ENCODE measurements at regions of chr1 and their contacts with region 1.

Region 1: GRCh38 chr1:205591522-205592351 is 40.1 kb downstream of the ELK4 start:
- DNase-seq: peak; percentile 82 to 91 (median 85)
- H3K4me3 ChIP-seq: peak overlapping the region; percentile 68
- H3K4me3 Mint-ChIP-seq: peak overlapping the region; percentile 86 to 94 (median 89)
- H3K27ac ChIP-seq: peak overlapping the region; percentile 26
- H3K27ac Mint-ChIP-seq: peak overlapping the region; percentile 33 to 93 (median 90)
- H3K4me1 ChIP-seq: peaks cover 37% of the 10 kb centered on the region
- H3K4me1 Mint-ChIP-seq: peaks cover 17 to 30% (median 29%) of the 10 kb centered on the region in 3 donors
- H3K27me3 ChIP-seq: no peaks in the 10 kb centered on the region
- H3K27me3 Mint-ChIP-seq: no peaks in the 10 kb centered on the region

Region 2: DNA sequence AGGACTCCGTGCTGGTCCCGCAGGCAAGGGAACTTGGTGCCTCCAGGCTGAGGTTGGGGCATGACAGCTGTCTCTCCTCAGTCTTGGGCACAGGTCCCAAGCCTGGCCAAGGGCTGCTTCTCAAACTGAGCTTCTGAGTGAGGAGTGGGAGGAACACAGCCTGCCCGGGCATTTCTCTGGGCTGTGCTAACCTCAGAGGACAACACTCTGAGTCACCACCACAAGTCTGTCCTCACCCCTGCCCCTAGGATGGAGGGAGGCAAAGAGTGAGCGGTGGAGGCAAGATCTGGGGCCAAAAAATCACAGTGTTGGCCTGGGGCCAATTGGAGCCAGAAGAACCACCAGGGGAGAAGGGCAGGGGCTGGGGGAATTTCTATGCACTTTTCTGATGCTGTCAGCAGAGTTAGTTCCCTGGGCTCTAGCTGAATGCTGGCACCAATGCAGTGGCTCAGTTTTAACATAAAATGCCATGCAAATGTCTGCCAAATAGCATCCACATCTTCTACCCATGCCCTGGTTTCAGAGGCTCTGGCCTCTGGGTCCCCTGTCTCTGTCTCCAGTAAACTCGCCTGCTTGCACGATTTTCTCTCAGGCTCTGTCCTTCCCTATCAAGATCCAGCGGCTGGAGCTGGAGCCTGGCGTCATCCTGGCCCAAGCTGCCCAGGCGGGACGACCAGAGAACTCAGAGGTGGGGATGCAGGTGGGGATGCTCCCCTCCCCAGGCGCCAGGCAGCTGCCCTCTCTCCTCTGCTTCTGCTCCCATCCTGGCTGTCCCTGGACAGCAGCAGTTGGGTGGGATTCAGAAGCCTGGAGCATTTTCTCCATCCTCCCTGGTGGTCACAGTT is 98.3 kb before region 1 on chr1:
- CTCF ChIA-PET with region 1: no interaction called
- POLR2A ChIA-PET with region 1: no interaction called
- DNase-seq: no peak
- H3K4me3 ChIP-seq: no peak overlapping the region
- H3K4me3 Mint-ChIP-seq: no peak overlapping the region
- H3K27ac ChIP-seq: no peak overlapping the region
- H3K27ac Mint-ChIP-seq: no peak overlapping the region
- H3K4me1 ChIP-seq: no peaks in the 10 kb centered on the region
- H3K4me1 Mint-ChIP-seq: no peaks in the 10 kb centered on the region
- H3K27me3 ChIP-seq: peaks cover 12% of the 10 kb centered on the region
- H3K27me3 Mint-ChIP-seq: peaks cover 14 to 43% of the 10 kb centered on the region in 2 donors

Region 3: GRCh38 chr1:205528887-205529825 is 62.6 kb before region 1 on chr1:
- CTCF ChIA-PET with region 1: interaction called, 16 read pairs
- POLR2A ChIA-PET with region 1: no interaction called
- DNase-seq: peak; percentile 64 to 82 (median 75)
- H3K4me3 ChIP-seq: no peak overlapping the region
- H3K4me3 Mint-ChIP-seq: peak overlapping the region in 6 of 7 donors; percentile 34 to 78 (median 44)
- H3K27ac ChIP-seq: no peak overlapping the region
- H3K27ac Mint-ChIP-seq: peak overlapping the region in 1 of 8 donors; percentile 19
- H3K4me1 ChIP-seq: no peaks in the 10 kb centered on the region
- H3K4me1 Mint-ChIP-seq: peaks cover 0 to 7% (median 4%) of the 10 kb centered on the region in 3 donors
- H3K27me3 ChIP-seq: no peaks in the 10 kb centered on the region
- H3K27me3 Mint-ChIP-seq: peaks cover 4 to 8% of the 10 kb centered on the region in 2 donors

Region 4: GRCh38 chr1:205631727-205632373 is 40.1 kb after region 1 on chr1 and contains the start of gene ELK4:
- CTCF ChIA-PET with region 1: interaction called, 96 read pairs
- POLR2A ChIA-PET with region 1: interaction called, 67 read pairs
- DNase-seq: peak; percentile 99 to 100 (median 99)
- H3K4me3 ChIP-seq: peak within 1 kb of the TSS; percentile 80
- H3K4me3 Mint-ChIP-seq: peak within 1 kb of the TSS; percentile 88 to 95 (median 91)
- H3K27ac ChIP-seq: peak within 1 kb of the TSS; percentile 89
- H3K27ac Mint-ChIP-seq: peak within 1 kb of the TSS; percentile 90 to 99 (median 98)
- H3K4me1 ChIP-seq: peaks cover 41% of the 10 kb centered on the region
- H3K4me1 Mint-ChIP-seq: peaks cover 39 to 53% (median 46%) of the 10 kb centered on the region in 3 donors
- H3K27me3 ChIP-seq: no peaks in the 10 kb centered on the region
- H3K27me3 Mint-ChIP-seq: peaks cover 0 to 1% of the 10 kb centered on the region in 2 donors
- total RNA-seq, gene ELK4: 83.3 to 88.7 TPM

Region 5: DNA sequence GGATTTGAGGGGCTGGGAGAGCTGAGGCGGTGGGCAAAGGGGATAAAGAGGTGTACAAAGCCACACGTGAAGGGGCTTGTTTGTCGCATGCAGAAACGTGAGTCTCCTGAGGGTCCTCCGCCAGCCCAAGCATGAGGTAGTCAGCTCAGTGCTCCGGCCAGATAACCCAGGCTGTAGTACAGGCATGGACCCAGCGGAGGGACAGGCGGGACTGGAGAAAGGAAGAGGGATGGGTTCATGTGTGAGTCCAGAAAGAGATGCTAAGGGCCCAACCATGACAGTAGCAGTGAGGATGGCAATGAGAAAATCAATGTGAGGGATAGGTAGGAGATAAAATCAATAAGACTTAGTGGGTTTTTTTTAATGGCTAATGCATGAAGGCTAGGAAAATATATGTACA is 53.8 kb after region 1 on chr1:
- CTCF ChIA-PET with region 1: interaction called, 10 read pairs
- POLR2A ChIA-PET with region 1: no interaction called
- DNase-seq: no peak
- H3K4me3 ChIP-seq: no peak overlapping the region
- H3K4me3 Mint-ChIP-seq: no peak overlapping the region
- H3K27ac ChIP-seq: no peak overlapping the region
- H3K27ac Mint-ChIP-seq: no peak overlapping the region
- H3K4me1 ChIP-seq: no peaks in the 10 kb centered on the region
- H3K4me1 Mint-ChIP-seq: no peaks in the 10 kb centered on the region
- H3K27me3 ChIP-seq: no peaks in the 10 kb centered on the region
- H3K27me3 Mint-ChIP-seq: peaks cover 9 to 21% of the 10 kb centered on the region in 2 donors

Region 6: DNA sequence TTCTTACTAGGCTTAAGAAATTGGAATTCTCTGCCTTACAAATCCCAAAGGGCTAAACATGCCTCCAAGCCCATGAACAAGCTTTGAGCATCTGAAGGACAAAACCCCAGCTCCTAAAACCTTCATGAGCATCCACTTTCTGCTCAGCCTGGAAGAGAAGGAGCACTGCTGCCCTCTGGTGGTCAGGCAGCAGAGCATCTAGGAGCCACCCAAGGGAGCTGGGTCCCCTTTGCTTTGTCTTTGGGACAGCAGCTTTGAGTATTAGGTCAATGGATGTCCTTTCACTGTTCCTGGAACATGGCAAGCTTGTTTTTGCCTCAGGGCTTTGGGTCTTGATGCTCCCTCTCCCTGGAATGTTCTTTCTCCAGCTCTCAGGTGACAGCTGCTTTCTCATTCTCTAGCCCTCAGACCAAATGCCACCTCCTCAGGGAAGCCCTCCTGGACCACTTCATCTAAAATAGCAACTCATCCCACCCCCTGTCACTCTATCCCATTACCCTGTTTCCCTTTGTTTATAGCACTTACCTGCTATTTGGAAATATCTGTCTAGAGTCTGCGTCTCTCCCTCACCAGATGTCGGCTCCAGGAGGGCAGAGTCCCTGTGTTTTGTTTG is 385.8 kb after region 1 on chr1:
- CTCF ChIA-PET with region 1: interaction called, 12 read pairs
- POLR2A ChIA-PET with region 1: no interaction called
- DNase-seq: peak; percentile 60 to 79 (median 63)
- H3K4me3 ChIP-seq: no peak overlapping the region
- H3K4me3 Mint-ChIP-seq: no peak overlapping the region
- H3K27ac ChIP-seq: no peak overlapping the region
- H3K27ac Mint-ChIP-seq: no peak overlapping the region
- H3K4me1 ChIP-seq: no peaks in the 10 kb centered on the region
- H3K4me1 Mint-ChIP-seq: no peaks in the 10 kb centered on the region
- H3K27me3 ChIP-seq: no peaks in the 10 kb centered on the region
- H3K27me3 Mint-ChIP-seq: peaks cover 1 to 3% of the 10 kb centered on the region in 2 donors

Measured in CD8-positive, alpha-beta memory T cell (primary cell).